ENCODE measurements at regions of chr2 and their contacts with region 1.

Region 1: GRCh38 chr2:73828818-73829570 is at the start of gene STAMBP:
- DNase-seq: peak; percentile 78 to 97 (median 88)
- ATAC-seq: peak; percentile 90
- H3K4me3 ChIP-seq: peak within 1 kb of the TSS; percentile 83
- H3K4me3 Mint-ChIP-seq: peak within 1 kb of the TSS; percentile 98
- H3K27ac ChIP-seq: peak within 1 kb of the TSS; percentile 90 to 97
- H3K27ac Mint-ChIP-seq: peak within 1 kb of the TSS; percentile 95
- H3K4me1 ChIP-seq: peaks cover 25% of the 10 kb centered on the region
- H3K4me1 Mint-ChIP-seq: peaks cover 60% of the 10 kb centered on the region
- H3K27me3 ChIP-seq: no peaks in the 10 kb centered on the region
- H3K27me3 Mint-ChIP-seq: no peaks in the 10 kb centered on the region
- CTCF ChIP-seq: no peak
- total RNA-seq, gene STAMBP: 11.3 to 13.8 TPM

Region 2: DNA sequence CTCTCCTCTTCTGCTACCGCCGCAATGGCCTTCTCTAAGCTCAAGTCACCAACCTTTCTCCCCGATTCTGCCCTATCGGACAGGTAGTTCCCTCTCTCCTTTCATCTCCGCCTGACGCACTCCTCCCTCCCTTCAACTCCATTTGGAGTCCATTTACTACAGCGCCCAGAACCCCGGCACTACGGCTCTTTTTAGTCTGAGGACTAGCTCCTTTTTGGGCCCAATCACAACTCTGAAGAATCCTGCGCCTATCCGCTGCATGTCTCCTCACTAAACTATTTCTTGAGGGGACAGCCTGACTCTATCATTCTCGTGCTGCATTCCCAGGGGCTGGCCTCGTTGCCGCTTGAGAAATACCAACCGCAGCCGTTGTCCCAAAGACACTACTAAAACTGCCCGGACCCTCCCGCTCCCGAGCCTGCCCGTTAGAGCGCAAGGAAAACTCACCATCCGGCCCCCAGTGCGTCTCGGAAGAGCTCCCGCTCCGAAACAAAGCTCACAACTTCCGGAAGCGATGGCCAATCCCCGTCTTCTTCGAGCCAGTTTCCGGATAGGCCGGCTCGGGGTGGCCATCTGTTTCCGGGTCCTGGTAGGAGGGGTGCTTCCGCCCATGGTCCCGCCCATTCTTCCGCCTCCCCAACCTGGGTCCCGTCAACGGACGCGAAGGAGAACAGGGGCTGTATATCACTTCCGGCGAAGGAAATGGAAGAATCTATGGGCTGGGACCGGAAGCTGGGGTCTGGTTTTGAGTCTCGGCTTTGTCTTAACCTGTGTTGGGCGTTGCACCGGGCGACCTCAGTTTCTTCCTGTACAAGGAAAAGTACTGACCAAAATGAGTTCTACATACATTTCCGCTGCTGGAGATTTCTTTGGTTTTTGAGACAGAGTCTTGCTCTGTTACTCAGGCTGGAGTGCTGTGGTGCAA is 91.9 kb before region 1 on chr2 and contains the start of gene TPRKB:
- CTCF ChIA-PET with region 1: no interaction called
- POLR2A ChIA-PET with region 1: interaction called, 17 read pairs
- intact Hi-C with region 1: no loop called
- DNase-seq: peak; percentile 85 to 98 (median 93)
- ATAC-seq: peak; percentile 93
- H3K4me3 ChIP-seq: peak within 1 kb of the TSS; percentile 91
- H3K4me3 Mint-ChIP-seq: peak within 1 kb of the TSS; percentile 91
- H3K27ac ChIP-seq: peak within 1 kb of the TSS; percentile 55 to 62
- H3K27ac Mint-ChIP-seq: peak within 1 kb of the TSS; percentile 76
- H3K4me1 ChIP-seq: peaks cover 15% of the 10 kb centered on the region
- H3K4me1 Mint-ChIP-seq: peaks cover 20% of the 10 kb centered on the region
- H3K27me3 ChIP-seq: no peaks in the 10 kb centered on the region
- H3K27me3 Mint-ChIP-seq: no peaks in the 10 kb centered on the region
- CTCF ChIP-seq: no peak
- total RNA-seq, gene TPRKB: 16.1 to 18.2 TPM

Region 3: DNA sequence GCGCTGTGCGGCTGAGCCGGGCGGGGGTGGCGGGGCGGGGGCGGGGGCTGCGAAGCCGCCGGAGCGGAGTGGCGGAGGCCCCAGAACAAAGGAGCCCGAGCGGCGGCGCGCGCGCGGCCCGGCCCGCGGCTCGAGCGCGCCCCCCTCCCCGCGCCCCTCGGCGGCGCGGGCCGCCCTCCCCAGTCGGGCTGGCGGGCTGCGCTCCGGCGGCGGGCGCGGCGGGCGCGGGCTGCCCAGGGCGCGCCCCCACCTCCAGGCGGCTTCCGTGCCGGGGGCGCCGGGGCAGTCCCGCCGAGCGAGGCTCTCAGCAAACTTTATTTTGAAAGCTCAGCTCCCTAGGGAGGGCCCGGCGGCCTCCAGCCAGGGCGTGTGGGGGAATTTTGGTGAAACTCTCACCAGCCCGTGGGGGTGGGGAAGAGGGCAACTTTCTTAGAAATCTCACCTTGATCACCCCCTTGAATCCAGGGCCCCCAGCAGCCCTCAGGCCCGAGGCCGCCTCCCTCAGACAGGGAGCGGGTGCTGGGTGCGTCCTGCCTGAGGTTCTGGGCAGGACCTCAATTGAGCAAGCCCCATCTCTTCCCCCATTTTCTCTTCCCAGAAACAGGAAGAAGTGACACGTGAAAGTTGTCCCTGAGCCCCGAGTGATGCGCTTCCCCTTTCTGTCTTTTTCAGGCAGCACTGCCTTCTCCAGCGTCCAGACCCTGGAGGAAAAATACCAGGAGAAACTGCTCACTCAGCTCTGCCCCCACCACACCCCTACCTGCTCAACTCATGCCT is 156.5 kb after region 1 on chr2:
- CTCF ChIA-PET with region 1: interaction called, 7 read pairs
- POLR2A ChIA-PET with region 1: interaction called, 6 read pairs
- intact Hi-C with region 1: loop called (anchors 10 kb)
- DNase-seq: peak in 10 of 14 experiments; percentile 21 to 84 (median 38)
- ATAC-seq: peak; percentile 39
- H3K4me3 ChIP-seq: peak overlapping the region; percentile 80
- H3K4me3 Mint-ChIP-seq: peak overlapping the region; percentile 84
- H3K27ac ChIP-seq: peak overlapping the region; percentile 64 to 71
- H3K27ac Mint-ChIP-seq: peak overlapping the region; percentile 81
- H3K4me1 ChIP-seq: peaks cover 72% of the 10 kb centered on the region
- H3K4me1 Mint-ChIP-seq: peaks cover 80% of the 10 kb centered on the region
- H3K27me3 ChIP-seq: no peaks in the 10 kb centered on the region
- H3K27me3 Mint-ChIP-seq: no peaks in the 10 kb centered on the region
- CTCF ChIP-seq: no peak

Region 4: GRCh38 chr2:74178201-74179062 is 349.4 kb after region 1 on chr2 and contains the start of gene MOB1A:
- CTCF ChIA-PET with region 1: interaction called, 11 read pairs
- POLR2A ChIA-PET with region 1: interaction called, 27 read pairs
- intact Hi-C with region 1: no loop called
- DNase-seq: peak; percentile 93 to 99 (median 97)
- ATAC-seq: peak; percentile 95
- H3K4me3 ChIP-seq: peak within 1 kb of the TSS; percentile 62
- H3K4me3 Mint-ChIP-seq: peak within 1 kb of the TSS; percentile 95
- H3K27ac ChIP-seq: peak within 1 kb of the TSS; percentile 89 to 96
- H3K27ac Mint-ChIP-seq: peak within 1 kb of the TSS; percentile 91
- H3K4me1 ChIP-seq: peaks cover 35% of the 10 kb centered on the region
- H3K4me1 Mint-ChIP-seq: peaks cover 39% of the 10 kb centered on the region
- H3K27me3 ChIP-seq: no peaks in the 10 kb centered on the region
- H3K27me3 Mint-ChIP-seq: no peaks in the 10 kb centered on the region
- CTCF ChIP-seq: no peak
- total RNA-seq, gene MOB1A: 150 to 159 TPM

Region 5: DNA sequence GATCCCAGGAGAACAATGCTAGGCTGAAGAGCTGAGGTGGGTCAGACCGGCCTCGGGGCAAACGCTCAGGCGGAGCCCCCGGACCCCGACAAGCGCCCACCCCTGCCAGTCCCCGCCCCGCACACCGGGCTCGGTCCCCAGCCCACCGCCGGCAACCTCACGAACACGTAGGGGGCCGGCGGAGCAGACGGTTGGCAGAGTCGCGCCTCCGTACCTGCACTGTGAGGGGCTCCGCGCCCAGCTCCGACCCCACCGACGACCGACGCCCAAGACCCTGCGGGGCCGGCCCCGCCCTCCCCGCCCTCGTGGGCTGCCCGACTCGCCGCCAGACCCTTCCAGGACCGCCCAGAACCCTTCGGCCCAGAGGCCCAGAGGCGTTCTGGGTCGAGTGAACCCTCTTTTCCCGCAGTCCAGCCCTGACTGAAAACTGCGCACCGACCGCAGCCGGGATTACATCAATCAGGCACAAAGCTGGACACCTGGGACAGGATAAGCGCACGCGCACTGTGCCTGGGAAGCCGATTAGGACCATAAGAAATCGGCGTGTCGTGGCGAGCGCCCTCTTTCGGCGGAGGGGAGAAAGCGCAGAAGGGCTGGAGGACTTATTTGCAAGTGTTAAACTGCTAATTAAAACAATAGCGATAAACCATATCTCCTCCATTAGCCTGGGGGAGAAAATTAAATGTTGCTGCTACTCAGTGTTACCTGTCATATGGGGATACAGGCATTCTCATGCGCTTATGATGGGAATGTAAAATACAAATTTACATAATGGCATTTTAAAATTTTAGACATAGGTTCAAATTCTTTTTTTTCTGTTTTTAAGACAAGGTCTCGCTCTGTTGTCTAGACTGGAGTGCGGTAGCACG is 562.8 kb after region 1 on chr2:
- CTCF ChIA-PET with region 1: interaction called, 6 read pairs
- POLR2A ChIA-PET with region 1: interaction called, 3 read pairs
- intact Hi-C with region 1: loop called (anchors 10 kb)
- DNase-seq: peak; percentile 92 to 98 (median 96)
- ATAC-seq: peak; percentile 90
- H3K4me3 ChIP-seq: peak overlapping the region; percentile 72
- H3K4me3 Mint-ChIP-seq: peak overlapping the region; percentile 99
- H3K27ac ChIP-seq: peak overlapping the region; percentile 88 to 92
- H3K27ac Mint-ChIP-seq: no peak overlapping the region
- H3K4me1 ChIP-seq: peaks cover 34% of the 10 kb centered on the region
- H3K4me1 Mint-ChIP-seq: peaks cover 9% of the 10 kb centered on the region
- H3K27me3 ChIP-seq: peaks cover 0 to 5% of the 10 kb centered on the region in 2 experiments
- H3K27me3 Mint-ChIP-seq: no peaks in the 10 kb centered on the region
- CTCF ChIP-seq: peak; percentile 99

Region 6: DNA sequence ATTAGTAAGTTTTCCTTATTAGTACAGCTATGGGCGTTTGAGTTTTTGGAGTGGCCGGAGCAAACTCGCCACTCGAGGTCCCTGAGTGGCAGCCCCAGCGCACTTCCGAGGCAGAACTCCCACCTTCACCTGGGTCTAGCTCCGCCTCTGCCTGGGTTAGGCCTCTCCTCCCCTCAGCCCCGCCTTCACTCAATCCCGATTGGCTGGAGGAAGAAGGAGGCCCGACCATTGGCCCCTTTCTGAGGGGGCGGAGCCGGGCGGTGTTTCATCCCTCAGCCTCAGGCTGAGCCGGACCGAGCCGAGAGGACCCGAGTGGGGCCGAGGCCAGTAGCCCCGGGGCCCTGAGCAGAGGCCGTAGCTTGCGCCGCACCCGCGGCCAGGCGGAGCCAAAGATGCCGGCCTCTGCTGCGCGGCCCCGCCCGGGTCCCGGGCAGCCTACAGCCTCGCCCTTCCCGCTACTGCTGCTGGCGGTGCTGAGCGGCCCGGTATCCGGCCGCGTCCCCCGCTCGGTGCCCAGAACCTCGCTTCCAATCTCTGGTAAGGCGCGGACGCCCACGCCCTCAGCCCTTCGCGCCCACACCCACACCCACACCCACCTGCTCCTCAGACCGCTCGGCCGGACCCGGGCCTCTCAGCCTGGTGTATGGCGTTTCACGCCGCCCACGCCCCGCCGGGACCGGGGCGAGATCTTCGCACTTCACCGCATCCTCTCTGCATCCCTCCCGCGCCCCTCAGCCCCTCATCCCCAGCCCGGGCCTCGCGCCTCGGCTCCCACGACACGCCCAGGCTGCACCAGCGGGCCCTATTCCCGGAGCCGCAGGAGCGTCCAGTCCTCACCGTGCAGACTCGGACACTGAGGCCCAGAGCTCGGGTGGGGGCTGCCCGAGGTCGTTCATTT is 825.2 kb after region 1 on chr2 and contains the start of gene SEMA4F:
- CTCF ChIA-PET with region 1: no interaction called
- POLR2A ChIA-PET with region 1: no interaction called
- intact Hi-C with region 1: loop called in 1 of 2 experiments (anchors 10 kb)
- DNase-seq: peak; percentile 83 to 96 (median 92)
- ATAC-seq: peak; percentile 99
- H3K4me3 ChIP-seq: peak within 1 kb of the TSS; percentile 80
- H3K4me3 Mint-ChIP-seq: peak within 1 kb of the TSS; percentile 88
- H3K27ac ChIP-seq: no peak within 1 kb of the TSS
- H3K27ac Mint-ChIP-seq: peak within 1 kb of the TSS; percentile 80
- H3K4me1 ChIP-seq: peaks cover 18% of the 10 kb centered on the region
- H3K4me1 Mint-ChIP-seq: peaks cover 26% of the 10 kb centered on the region
- H3K27me3 ChIP-seq: peaks cover 2 to 5% of the 10 kb centered on the region in 2 experiments
- H3K27me3 Mint-ChIP-seq: peaks cover 14% of the 10 kb centered on the region
- CTCF ChIP-seq: no peak
- total RNA-seq, gene SEMA4F: 6.8 to 7.3 TPM